ENCODE measurements at regions of chr5 and their contacts with region 1.

Region 1: GRCh38 chr5:160175438-160176218 is 53.7 kb upstream of the FABP6 start:
- DNase-seq: no peak
- H3K4me3 ChIP-seq: no peak overlapping the region
- H3K27ac ChIP-seq: no peak overlapping the region
- H3K4me1 ChIP-seq: peaks cover 6 to 15% (median 7%) of the 10 kb centered on the region in 4 experiments; a peak in 6 of 7 replicates
- H3K27me3 ChIP-seq: no peaks in the 10 kb centered on the region
- CTCF ChIP-seq: no peak
- EP300 ChIP-seq: no peak
- POLR2A ChIP-seq: no peak
- RAD21 ChIP-seq: no peak

Region 2: GRCh38 chr5:160188142-160189015 is 12.8 kb after region 1 on chr5:
- CTCF ChIA-PET with region 1: interaction called, 15 read pairs
- POLR2A ChIA-PET with region 1: interaction called, 33 read pairs
- DNase-seq: peak in 1 of 2 experiments; percentile 86
- H3K4me3 ChIP-seq: peak overlapping the region; percentile 27 to 53 (median 31); a peak in 6 of 8 replicates
- H3K27ac ChIP-seq: peak overlapping the region; percentile 81
- H3K4me1 ChIP-seq: peaks cover 0 to 7% (median 3%) of the 10 kb centered on the region in 4 experiments; a peak in 6 of 7 replicates
- H3K27me3 ChIP-seq: no peaks in the 10 kb centered on the region
- CTCF ChIP-seq: no peak
- EP300 ChIP-seq: peak in 1 of 2 experiments; percentile 8; a peak in 1 of 3 replicates
- POLR2A ChIP-seq: peak; percentile 39 to 71
- RAD21 ChIP-seq: peak; percentile 7 to 26; a peak in 1 of 4 replicates

Region 3: GRCh38 chr5:160280384-160281095 is 104.9 kb after region 1 on chr5:
- CTCF ChIA-PET with region 1: no interaction called
- POLR2A ChIA-PET with region 1: no interaction called
- DNase-seq: no peak
- H3K4me3 ChIP-seq: no peak overlapping the region
- H3K27ac ChIP-seq: no peak overlapping the region
- H3K4me1 ChIP-seq: peaks cover 0 to 8% (median 3%) of the 10 kb centered on the region in 4 experiments; a peak in 4 of 7 replicates
- H3K27me3 ChIP-seq: no peaks in the 10 kb centered on the region
- CTCF ChIP-seq: no peak
- EP300 ChIP-seq: no peak
- POLR2A ChIP-seq: no peak
- RAD21 ChIP-seq: no peak